WTC11 (cell line): ENCODE measurements at regions of chr4 and their contacts with region 1.

Region 1: GRCh38 chr4:16196478-16197393 is 29.5 kb downstream of the TAPT1 start:
- DNase-seq: no peak
- ATAC-seq: peak; percentile 98
- H3K4me3 Mint-ChIP-seq: no peak overlapping the region
- H3K27ac Mint-ChIP-seq: peak overlapping the region; percentile 33
- H3K4me1 Mint-ChIP-seq: peaks cover 31% of the 10 kb centered on the region
- H3K27me3 Mint-ChIP-seq: no peaks in the 10 kb centered on the region
- CTCF ChIP-seq: no peak

Region 2: DNA sequence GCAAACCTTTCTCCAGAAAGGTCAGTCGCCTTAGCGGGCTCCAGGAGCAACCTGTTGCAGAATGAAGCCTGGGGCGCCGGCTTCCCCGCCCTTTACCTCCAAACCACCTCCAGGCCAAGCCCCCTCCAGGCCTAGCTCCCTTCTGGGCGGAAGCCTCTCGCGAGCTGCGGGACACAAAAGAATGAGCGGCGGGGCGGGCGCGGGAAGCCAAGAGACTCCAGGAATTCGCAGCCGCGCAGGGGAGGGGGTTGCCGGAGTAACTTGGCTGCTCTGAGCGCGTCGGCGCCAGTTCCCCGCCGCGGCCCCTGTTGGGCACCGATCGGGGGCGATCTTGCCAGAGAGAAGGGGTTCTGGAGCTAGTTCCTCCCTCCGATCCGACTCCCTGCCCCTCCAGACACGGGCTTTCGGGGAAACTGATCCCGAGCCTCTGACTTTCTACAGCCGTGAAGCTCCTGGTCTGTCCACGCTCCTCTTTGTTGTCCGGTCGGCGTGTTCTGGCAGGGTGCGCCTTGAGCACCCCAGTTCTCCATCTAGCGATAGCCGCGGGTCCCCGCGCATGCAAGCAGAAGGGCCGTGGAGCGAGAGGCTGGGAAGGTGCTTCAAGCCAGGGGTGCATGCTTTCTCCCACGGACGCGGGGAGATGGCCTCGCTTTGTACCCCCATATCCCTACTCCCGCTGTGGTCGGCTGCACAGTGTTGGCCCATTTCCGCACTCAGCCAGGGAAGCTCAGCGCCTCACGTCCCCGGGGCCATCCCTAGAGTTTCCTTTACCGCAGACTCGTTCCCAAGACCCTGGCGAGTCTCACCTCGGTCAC is 114.1 kb before region 1 on chr4:
- CTCF ChIA-PET with region 1: interaction called, 11 read pairs
- POLR2A ChIA-PET with region 1: interaction called, 3 read pairs
- DNase-seq: peak; percentile 93
- ATAC-seq: peak; percentile 75
- H3K4me3 Mint-ChIP-seq: peak overlapping the region; percentile 87
- H3K27ac Mint-ChIP-seq: peak overlapping the region; percentile 35; the same call in 1 of the 2 replicates
- H3K4me1 Mint-ChIP-seq: peaks cover 44% of the 10 kb centered on the region
- H3K27me3 Mint-ChIP-seq: peaks cover 43% of the 10 kb centered on the region
- CTCF ChIP-seq: no peak

Region 3: GRCh38 chr4:16264798-16265197 is 68.1 kb after region 1 on chr4:
- CTCF ChIA-PET with region 1: interaction called, 19 read pairs
- POLR2A ChIA-PET with region 1: no interaction called
- DNase-seq: no peak
- ATAC-seq: no peak
- H3K4me3 Mint-ChIP-seq: no peak overlapping the region
- H3K27ac Mint-ChIP-seq: no peak overlapping the region
- H3K4me1 Mint-ChIP-seq: no peaks in the 10 kb centered on the region
- H3K27me3 Mint-ChIP-seq: no peaks in the 10 kb centered on the region
- CTCF ChIP-seq: no peak

Region 4: DNA sequence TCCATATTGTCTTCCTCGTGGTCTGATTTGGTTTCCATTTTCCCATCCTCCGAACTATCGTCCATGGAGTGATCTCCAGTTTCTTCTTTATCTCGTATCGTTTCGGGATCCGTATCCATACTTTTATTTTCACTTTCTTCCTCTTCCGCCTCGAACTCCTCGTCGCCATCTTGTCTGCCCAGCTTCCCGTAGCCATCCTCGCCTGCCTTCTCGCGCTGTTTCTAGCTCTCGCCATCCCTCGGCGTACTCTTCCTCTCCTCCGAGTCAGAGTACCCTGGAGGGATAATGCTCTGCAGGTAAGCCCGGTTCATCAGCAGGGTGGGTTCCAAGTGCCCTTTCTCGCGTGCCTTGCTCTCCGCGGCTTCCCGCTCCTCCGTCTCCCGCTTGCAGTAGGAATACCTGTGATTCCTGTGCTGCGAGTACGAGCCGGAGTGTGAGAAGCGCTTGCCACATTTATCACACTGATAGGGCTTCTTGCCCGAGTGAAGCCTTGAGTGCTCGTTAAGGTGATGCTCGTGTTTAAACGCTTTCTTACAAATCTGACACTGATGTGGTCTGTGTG is 164.0 kb after region 1 on chr4:
- CTCF ChIA-PET with region 1: no interaction called
- POLR2A ChIA-PET with region 1: no interaction called
- DNase-seq: no peak
- ATAC-seq: peak; percentile 36
- H3K4me3 Mint-ChIP-seq: no peak overlapping the region
- H3K27ac Mint-ChIP-seq: no peak overlapping the region
- H3K4me1 Mint-ChIP-seq: no peaks in the 10 kb centered on the region
- H3K27me3 Mint-ChIP-seq: no peaks in the 10 kb centered on the region
- CTCF ChIP-seq: no peak